ENCODE measurements at regions of chr9 and their contacts with region 1.

Region 1: DNA sequence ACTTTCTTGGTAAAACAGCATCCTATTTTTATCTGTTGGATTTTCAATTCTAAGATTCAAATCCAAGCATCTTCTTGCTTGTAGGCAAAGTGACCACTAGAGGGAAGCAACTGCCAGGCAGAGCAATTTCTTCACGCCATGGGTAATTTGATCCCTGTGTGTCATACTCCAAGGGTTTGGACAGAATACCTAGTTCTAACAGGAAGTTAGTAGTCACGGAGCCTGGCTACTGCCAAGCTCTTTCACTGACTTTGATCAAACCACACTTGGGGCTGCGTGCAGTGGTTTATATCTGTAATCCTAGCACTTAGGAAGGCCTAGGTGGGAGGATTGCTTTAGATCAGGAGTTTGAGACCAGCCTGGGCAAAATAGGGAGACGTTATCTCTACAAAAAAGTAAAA is 473.6 kb upstream of the TNC start:
- DNase-seq: peak in 6 of 10 donors; percentile 9 to 58 (median 45)
- H3K4me3 ChIP-seq: no peak overlapping the region
- H3K27ac ChIP-seq: no peak overlapping the region
- H3K27me3 ChIP-seq: peaks cover 0 to 28% (median 12%) of the 10 kb centered on the region in 45 donors
- CTCF ChIP-seq: peak in 55 of 56 donors; percentile 48 to 88 (median 78)

Region 2: GRCh38 chr9:115425601-115426000 is 166.0 kb before region 1 on chr9:
- intact Hi-C with region 1: no loop called
- DNase-seq: no peak
- H3K4me3 ChIP-seq: no peak overlapping the region
- H3K27ac ChIP-seq: no peak overlapping the region
- H3K27me3 ChIP-seq: no peaks in the 10 kb centered on the region
- CTCF ChIP-seq: no peak

Region 3: GRCh38 chr9:115481769-115482168 is 109.8 kb before region 1 on chr9:
- intact Hi-C with region 1: no loop called
- DNase-seq: no peak
- H3K4me3 ChIP-seq: no peak overlapping the region
- H3K27ac ChIP-seq: no peak overlapping the region
- H3K27me3 ChIP-seq: no peaks in the 10 kb centered on the region
- CTCF ChIP-seq: no peak

Region 4: DNA sequence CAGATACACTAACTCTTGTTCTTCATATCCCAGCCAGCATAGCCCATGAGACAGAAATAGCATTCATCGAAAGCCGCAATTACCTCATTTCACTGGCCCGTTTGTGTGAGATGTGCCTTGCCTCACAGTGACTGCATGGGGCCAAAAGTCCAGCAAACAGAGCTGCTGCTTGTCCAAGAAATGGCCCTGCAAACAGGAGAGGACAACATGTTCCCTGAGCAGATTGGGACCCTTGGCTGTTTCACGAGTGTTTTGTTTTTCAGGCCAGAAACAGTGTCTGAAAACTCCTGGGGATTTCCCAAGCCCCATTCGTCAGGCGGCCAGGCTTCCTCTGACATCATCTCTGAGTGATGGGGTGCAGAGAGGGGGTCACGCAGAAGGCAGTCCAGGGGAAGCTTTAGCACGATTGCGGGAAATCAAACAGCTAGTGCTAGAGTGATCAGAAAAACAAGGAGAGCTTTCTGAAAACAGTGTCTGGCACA is 58.4 kb after region 1 on chr9:
- intact Hi-C with region 1: loop called in 1 of 2 experiments (anchors 5 kb)
- DNase-seq: peak; percentile 3 to 87 (median 70)
- H3K4me3 ChIP-seq: peak overlapping the region in 4 of 59 donors; percentile 8 to 33 (median 19)
- H3K27ac ChIP-seq: peak overlapping the region in 37 of 59 donors; percentile 0 to 84 (median 45)
- H3K27me3 ChIP-seq: peaks cover 0 to 6% (median 0%) of the 10 kb centered on the region in 45 donors
- CTCF ChIP-seq: peak in 2 of 56 donors; percentile 3 to 30

Region 5: DNA sequence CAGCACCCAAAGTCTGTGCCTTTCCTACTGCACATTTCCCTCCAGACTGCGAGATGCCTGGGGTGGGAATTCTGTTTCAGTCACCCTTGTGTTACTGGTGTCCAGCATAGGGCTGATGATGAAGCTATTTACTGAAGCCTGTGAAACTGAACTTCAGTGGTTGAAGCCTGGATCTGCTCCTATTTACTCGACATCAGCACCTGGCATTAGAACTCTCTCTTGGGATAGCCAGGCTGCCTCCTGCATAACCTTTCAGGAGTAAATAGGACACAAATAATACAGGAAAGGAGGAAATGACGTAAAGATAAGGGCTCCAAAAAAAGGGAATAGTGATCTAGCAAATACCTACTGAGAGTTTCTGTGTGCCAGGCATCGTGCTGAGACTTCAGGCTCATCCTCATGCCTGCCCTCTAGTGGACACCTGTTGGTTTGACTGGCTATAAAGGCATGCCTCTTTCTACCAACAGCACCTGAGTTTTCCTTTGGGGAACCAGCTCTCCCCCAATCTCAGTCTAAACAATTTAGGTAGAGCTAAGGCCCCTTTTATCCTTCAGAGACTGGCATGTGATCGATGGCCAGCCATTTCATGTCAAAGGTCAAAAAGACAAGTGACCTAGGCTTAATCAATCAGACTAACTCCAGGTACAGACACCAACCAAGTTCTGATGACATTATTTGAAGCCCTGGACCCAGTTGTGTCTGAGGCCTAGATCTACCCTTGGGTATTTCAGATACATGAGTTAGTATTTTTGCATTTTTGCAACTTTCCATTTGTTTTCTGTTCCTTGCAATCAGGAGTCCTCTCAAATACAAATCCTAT is 903.4 kb after region 1 on chr9:
- intact Hi-C with region 1: loop called in 1 of 2 experiments (anchors 10 kb)
- DNase-seq: peak in 1 of 10 donors; percentile 39
- H3K4me3 ChIP-seq: no peak overlapping the region
- H3K27ac ChIP-seq: no peak overlapping the region
- H3K27me3 ChIP-seq: no peaks in the 10 kb centered on the region
- CTCF ChIP-seq: peak; percentile 21 to 71 (median 60)

Region 6: GRCh38 chr9:116572095-116572748 is 980.6 kb after region 1 on chr9:
- intact Hi-C with region 1: loop called (anchors 5 to 10 kb)
- DNase-seq: peak; percentile 61 to 81 (median 72)
- H3K4me3 ChIP-seq: no peak overlapping the region
- H3K27ac ChIP-seq: no peak overlapping the region
- H3K27me3 ChIP-seq: no peaks in the 10 kb centered on the region
- CTCF ChIP-seq: peak; percentile 55 to 94 (median 83)

Region 7: DNA sequence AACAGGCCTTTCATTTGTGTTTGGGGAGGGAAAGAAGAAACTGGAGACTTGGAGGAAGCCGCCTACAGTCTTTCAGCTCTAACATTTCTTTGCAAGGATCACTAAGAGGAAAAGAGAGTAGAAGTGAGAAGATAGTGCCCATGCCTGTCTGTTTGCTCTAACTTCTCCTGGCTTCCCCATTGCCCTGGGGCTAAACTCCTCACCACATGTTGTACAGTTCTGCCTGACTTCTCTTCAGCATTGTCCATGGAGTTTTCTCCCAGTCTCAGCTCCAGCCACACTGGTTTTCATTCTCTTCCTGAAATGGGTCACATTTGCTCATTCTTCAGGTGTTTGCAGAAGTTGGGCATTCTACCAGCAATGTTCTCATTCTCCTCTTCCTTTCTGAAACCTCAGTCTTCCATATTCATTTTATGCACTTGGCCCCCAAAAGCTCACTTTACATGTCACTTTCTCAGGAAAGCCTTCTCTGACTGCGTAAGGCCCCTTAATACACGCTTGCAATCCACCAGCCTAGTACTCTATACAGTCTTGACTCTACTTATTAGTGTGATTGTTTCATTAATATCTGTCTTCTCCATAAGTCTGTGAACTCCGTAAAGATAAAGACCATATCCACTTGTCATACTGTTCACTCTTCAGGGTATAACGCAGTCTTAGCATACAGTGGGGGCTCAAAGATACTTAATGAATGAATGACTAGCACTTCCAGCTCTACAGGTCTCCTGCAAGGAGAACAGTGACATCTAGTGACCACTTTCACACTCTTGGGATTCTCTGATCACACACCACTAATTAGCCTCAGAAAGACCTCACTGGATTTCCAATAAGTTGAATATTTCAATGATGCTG is 1055.3 kb after region 1 on chr9:
- intact Hi-C with region 1: loop called in 1 of 2 experiments (anchors 5 kb)
- DNase-seq: no peak
- H3K4me3 ChIP-seq: no peak overlapping the region
- H3K27ac ChIP-seq: no peak overlapping the region
- H3K27me3 ChIP-seq: no peaks in the 10 kb centered on the region
- CTCF ChIP-seq: peak in 55 of 56 donors; percentile 21 to 77 (median 60)

Region 8: DNA sequence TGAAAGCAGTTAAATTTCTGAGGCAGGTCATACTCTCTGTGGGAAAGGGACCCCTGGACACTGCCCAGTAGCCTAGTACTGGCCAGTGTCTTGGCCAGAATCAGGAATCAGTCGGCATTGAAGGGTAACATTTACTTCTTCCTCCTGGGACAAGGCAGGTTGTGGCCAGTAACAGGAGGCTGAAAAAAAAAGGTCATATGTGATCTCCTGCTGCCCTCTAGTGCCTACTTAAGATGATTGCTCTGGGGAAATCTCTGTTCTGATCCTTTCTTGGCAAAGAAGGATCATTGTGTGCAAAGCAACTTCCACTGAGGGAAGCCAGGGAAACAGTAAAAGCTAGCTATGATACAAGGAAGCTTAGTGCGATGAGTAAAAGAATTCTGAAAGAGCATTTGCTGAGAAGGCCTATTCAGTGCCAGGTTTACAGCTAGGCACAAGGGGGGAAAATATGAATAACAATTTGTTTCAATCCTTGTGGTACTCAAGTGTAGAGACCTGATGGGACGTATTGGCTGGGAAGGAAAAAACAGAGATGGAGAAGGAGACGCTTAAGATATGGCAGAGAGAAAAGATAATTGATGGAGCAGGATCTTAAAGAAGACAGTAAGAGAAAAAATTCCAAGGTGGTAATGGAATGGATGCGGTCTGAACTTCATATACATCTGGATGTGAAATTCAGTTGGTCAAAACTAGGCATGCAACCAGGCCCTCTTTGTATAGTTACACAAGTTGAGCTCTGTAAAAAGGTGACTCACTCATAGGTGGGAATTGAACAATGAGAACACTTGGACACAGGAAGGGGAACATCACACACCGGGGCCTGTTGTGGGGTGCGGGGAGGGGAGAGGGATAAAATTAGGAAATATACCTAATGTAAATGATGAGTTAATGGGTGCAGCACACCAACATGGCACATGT is 1069.7 kb after region 1 on chr9:
- intact Hi-C with region 1: loop called (anchors 5 kb)
- DNase-seq: peak in 1 of 10 donors; percentile 30
- H3K4me3 ChIP-seq: no peak overlapping the region
- H3K27ac ChIP-seq: no peak overlapping the region
- H3K27me3 ChIP-seq: no peaks in the 10 kb centered on the region
- CTCF ChIP-seq: peak in 55 of 56 donors; percentile 37 to 91 (median 78)

Measured in dorsolateral prefrontal cortex (tissue), 120 donors.